Ovary (tissue), 10 donors: ENCODE measurements at regions of chr1 and their contacts with region 1.

Region 1: DNA sequence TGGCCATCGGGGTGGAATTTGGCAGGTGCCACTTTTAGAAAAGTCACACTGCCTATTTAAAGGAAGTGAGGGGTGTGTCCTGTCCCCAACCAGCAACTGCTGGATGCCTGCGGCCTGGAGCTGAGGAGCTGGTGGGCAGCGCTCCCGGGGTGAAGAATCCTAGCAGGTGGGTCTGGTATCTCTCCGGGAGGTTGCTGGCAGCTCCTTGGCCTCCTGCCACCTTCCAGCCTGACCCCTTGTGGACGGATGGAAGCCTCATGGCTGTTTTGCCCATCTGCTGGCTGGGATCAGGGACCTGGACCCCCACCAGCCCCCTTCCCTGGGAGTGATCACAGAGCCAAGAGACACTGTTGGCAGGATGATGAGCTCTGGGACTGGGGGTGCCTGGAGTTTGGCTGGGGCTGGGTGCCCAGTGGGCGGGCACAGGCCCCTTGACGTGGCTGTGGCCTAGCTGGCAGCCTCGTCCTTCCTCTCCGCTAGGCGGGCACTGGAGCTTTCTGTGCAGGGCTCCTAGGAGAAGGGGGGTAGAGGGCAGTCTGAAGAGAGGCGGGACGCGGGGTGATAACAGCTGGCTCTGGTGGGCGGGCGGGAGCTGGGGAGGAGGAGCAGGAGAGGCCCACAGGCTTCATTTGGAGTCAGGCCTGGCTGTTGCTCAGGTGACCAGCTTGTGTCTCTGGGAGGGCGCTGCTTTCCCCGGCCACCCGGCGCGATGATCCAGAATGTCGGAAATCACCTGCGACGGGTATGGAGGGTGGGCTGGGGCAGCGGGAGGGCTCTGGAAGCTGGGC is at the start of gene ACOT11:
- DNase-seq: peak; percentile 89 to 95 (median 91)
- H3K4me3 ChIP-seq: peak within 1 kb of the TSS; percentile 27
- H3K27ac ChIP-seq: peak within 1 kb of the TSS; percentile 33 to 87
- H3K4me1 ChIP-seq: peaks cover 12% of the 10 kb centered on the region
- H3K27me3 ChIP-seq: no peaks in the 10 kb centered on the region
- CTCF ChIP-seq: peak; percentile 53 to 75 (median 62)
- EP300 ChIP-seq: no peak
- POLR2A ChIP-seq: no peak
- total RNA-seq, gene ACOT11: 7.6 to 28.4 (median 17.0) TPM

Region 2: GRCh38 chr1:54581621-54582035 is 33.8 kb after region 1 on chr1:
- intact Hi-C with region 1: loop called in 1 of 4 experiments (anchors 2 kb)
- DNase-seq: peak; percentile 89 to 95 (median 91)
- H3K4me3 ChIP-seq: no peak overlapping the region
- H3K27ac ChIP-seq: peak overlapping the region; percentile 16 to 83
- H3K4me1 ChIP-seq: peaks cover 26% of the 10 kb centered on the region
- H3K27me3 ChIP-seq: no peaks in the 10 kb centered on the region
- CTCF ChIP-seq: no peak
- EP300 ChIP-seq: no peak
- POLR2A ChIP-seq: peak; percentile 62